Aorta (tissue), 5 donors: ENCODE measurements at regions of chr1 and their contacts with region 1.

Region 1: GRCh38 chr1:3069491-3070303 is 694 bp downstream of the PRDM16 start:
- DNase-seq: peak; percentile 64 to 80
- ATAC-seq: peak; percentile 40
- H3K4me3 ChIP-seq: peak overlapping the region; percentile 90 to 94
- H3K27ac ChIP-seq: peak overlapping the region; percentile 96 to 98
- H3K4me1 ChIP-seq: no peaks in the 10 kb centered on the region
- H3K27me3 ChIP-seq: no peaks in the 10 kb centered on the region

Region 2: GRCh38 chr1:3012456-3013291 is 57.0 kb before region 1 on chr1:
- intact Hi-C with region 1: loop called in 1 of 2 experiments (anchors 5 kb)
- DNase-seq: peak; percentile 68 to 92
- ATAC-seq: peak; percentile 83
- H3K4me3 ChIP-seq: no peak overlapping the region
- H3K27ac ChIP-seq: no peak overlapping the region
- H3K4me1 ChIP-seq: no peaks in the 10 kb centered on the region
- H3K27me3 ChIP-seq: no peaks in the 10 kb centered on the region

Region 3: GRCh38 chr1:3186513-3186921 is 116.8 kb after region 1 on chr1:
- intact Hi-C with region 1: loop called (anchors 2 to 5 kb)
- DNase-seq: peak; percentile 95
- ATAC-seq: peak; percentile 83
- H3K4me3 ChIP-seq: no peak overlapping the region
- H3K27ac ChIP-seq: peak overlapping the region; percentile 85 to 89
- H3K4me1 ChIP-seq: no peaks in the 10 kb centered on the region
- H3K27me3 ChIP-seq: no peaks in the 10 kb centered on the region

Region 4: DNA sequence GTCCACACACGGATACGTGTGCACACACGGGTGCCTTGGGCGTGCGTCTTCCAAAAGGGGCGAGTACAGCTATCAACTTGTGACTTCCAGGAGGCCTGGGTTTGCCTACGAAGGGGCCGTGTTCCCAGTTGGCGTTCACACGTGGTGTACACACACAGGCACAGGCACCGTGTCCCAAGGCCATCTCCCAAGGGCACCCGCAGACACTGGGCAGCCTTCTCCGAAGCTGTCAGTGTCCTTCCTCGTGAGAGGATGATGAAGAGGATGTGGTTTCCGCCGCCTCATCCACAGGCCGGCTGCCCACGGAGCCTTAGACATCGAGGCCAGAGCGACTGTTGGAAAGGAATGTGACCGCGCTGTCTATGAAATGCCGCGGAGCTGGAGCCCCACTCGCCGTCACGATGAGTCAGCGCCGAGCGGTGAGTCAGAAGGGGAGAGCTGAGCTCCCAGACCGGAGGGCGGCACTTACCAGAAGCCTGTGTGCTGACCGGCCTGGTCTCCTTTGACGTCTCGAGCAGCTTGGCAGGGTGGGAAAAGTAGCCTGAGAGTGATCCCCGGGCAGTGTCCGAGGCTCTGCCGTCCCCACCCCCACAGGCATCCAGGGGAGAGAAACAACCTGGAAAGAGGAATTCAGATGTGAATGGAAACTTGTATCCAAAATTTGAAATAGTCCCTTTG is 243.3 kb after region 1 on chr1:
- intact Hi-C with region 1: loop called in 1 of 2 experiments (anchors 5 kb)
- DNase-seq: peak; percentile 98 to 99
- ATAC-seq: peak; percentile 95
- H3K4me3 ChIP-seq: no peak overlapping the region
- H3K27ac ChIP-seq: peak overlapping the region; percentile 91 to 99
- H3K4me1 ChIP-seq: no peaks in the 10 kb centered on the region
- H3K27me3 ChIP-seq: no peaks in the 10 kb centered on the region

Region 5: GRCh38 chr1:3423245-3423829 is 353.6 kb after region 1 on chr1:
- intact Hi-C with region 1: loop called (anchors 2 to 5 kb)
- DNase-seq: peak; percentile 88 to 90
- ATAC-seq: peak; percentile 84
- H3K4me3 ChIP-seq: no peak overlapping the region
- H3K27ac ChIP-seq: peak overlapping the region in 1 of 2 donors; percentile 72
- H3K4me1 ChIP-seq: no peaks in the 10 kb centered on the region
- H3K27me3 ChIP-seq: no peaks in the 10 kb centered on the region